ENCODE measurements at regions of chr1 and their contacts with region 1.

Region 1: DNA sequence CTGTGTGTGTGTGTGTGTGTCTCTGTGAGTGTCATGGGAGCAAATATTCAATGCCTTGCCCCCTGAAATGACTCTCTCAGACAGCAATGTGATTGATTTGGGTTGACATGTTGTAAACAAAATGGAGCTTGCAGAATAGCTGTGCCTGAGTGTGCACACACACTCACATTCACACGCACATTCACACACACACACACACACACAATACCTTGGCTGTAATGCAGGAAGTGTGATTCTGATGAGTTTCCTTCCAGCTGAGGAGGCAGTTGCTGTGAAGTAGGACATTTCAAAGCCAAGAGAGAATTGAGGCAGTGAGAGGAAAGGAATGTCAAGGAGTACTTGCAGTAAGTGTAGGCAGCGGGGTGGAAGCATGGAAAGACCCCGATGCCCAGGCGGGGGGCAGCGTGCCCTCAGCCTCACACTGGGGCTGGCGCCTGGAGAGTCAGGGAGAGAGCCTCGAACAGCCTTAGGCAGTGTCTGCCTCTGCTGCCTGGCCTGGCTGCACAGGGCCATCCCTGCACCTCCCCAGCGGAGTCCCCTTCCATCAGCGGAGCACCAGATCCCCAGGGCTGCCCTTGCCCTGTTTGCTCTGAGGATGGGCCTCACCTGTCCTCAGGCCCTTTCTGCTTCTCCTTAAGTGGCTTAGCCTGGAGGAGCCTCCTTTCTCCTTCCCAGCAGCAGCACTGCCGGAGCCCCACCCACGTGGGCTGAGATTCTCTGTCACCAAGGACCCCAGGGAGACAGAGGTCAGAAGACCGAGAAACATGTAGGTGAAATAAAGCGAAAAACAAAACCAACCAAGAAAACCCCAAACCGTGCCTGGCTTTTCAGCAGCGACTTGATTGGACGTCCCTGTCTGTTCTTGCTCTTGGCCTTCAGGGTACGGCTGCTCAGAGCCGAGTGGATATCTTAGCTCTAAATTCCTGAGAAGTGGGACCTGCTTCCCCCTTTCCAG is 9.2 kb downstream of the VASH2 start:
- DNase-seq: peak; percentile 79
- ATAC-seq: peak; percentile 77
- H3K4me3 ChIP-seq: peak overlapping the region; percentile 37; the same call in 1 of the 2 replicates
- H3K27ac ChIP-seq: peak overlapping the region; percentile 91
- H3K4me1 ChIP-seq: peaks cover 75% of the 10 kb centered on the region
- H3K27me3 ChIP-seq: no peaks in the 10 kb centered on the region
- CTCF ChIP-seq: no peak
- EP300 ChIP-seq: no peak
- POLR2A ChIP-seq: no peak
- RAD21 ChIP-seq: no peak

Region 2: DNA sequence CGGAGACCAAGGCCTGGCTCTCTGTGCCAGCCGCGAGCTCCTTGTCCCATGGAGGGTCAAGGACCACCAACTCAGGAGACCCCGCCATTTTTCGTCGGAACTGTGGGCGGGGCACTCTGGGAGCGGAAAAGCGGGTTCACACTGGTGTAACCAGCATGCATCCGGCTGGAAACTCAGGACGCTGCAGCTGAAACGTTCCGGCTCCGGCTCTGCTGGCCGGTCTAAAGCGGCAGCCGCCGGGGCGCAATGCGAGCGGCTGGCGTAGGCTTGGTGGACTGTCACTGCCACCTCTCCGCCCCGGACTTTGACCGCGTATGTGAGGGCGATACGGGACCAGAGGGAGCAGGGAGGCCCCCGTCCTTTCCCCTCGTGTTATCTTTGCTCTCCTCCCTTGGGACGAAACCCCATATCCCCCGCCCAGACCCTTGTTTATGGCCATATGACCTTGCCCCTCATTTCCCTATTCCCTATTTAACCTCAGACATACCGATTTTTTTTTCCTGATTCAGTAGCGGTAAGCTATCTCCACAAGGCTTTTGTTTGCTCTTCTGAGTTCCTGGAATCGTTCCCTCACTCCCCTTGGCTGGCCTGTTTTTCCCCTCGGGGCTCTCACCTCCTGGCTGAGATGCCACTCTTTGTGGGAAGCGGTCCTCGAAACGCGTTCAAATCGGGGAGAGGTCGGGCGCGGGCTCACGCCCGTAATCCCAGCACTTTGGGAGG is 167.7 kb before region 1 on chr1 and contains the starts of genes NSL1 and TATDN3:
- CTCF ChIA-PET with region 1: interaction called, 3 read pairs
- POLR2A ChIA-PET with region 1: interaction called, 8 read pairs
- RAD21 ChIA-PET with region 1: no interaction called
- SMC1A ChIA-PET with region 1: interaction called, 4 read pairs
- in situ Hi-C with region 1: no loop called
- intact Hi-C with region 1: loop called (anchors 2 kb)
- DNase-seq: peak; percentile 90
- ATAC-seq: peak; percentile 83
- H3K4me3 ChIP-seq: peak within 1 kb of the TSS; percentile 78
- H3K27ac ChIP-seq: peak within 1 kb of the TSS; percentile 97
- H3K4me1 ChIP-seq: peaks cover 8% of the 10 kb centered on the region
- H3K27me3 ChIP-seq: no peaks in the 10 kb centered on the region
- CTCF ChIP-seq: no peak
- EP300 ChIP-seq: no peak
- POLR2A ChIP-seq: peak; percentile 99
- RAD21 ChIP-seq: no peak
- polyA plus RNA-seq, gene NSL1: 46.5 to 67.2 TPM
- polyA plus RNA-seq, gene TATDN3: 34.0 to 40.0 TPM

Region 3: DNA sequence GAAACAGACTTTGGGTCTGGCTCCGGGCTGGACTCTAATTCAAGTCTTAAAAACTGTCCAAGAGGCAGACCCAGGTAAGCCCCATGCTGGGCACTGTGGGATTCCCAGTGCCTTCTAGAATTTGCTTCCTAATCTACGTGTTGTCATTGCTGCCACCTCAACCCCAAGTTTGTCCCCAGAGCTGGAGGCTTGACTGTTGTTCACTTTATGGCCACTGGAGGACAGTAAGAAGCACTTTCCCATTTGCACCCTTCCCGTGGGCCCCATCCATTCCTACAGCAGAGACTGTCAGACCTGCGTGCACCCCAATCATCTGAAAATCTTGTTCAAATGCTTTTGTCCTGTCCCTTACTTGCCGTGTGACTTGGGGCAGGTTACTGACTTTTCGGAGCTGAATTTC is 38.6 kb before region 1 on chr1:
- CTCF ChIA-PET with region 1: interaction called, 5 read pairs
- POLR2A ChIA-PET with region 1: interaction called, 4 read pairs
- RAD21 ChIA-PET with region 1: interaction called, 6 read pairs
- SMC1A ChIA-PET with region 1: interaction called, 27 read pairs
- in situ Hi-C with region 1: no loop called
- intact Hi-C with region 1: loop called (anchors 2 kb)
- DNase-seq: no peak
- ATAC-seq: peak; percentile 51
- H3K4me3 ChIP-seq: no peak overlapping the region
- H3K27ac ChIP-seq: no peak overlapping the region
- H3K4me1 ChIP-seq: peaks cover 20% of the 10 kb centered on the region
- H3K27me3 ChIP-seq: no peaks in the 10 kb centered on the region
- CTCF ChIP-seq: peak; percentile 45 to 67 (median 57); a peak in 5 of 6 replicates
- EP300 ChIP-seq: no peak
- POLR2A ChIP-seq: no peak
- RAD21 ChIP-seq: peak; percentile 71

Region 4: DNA sequence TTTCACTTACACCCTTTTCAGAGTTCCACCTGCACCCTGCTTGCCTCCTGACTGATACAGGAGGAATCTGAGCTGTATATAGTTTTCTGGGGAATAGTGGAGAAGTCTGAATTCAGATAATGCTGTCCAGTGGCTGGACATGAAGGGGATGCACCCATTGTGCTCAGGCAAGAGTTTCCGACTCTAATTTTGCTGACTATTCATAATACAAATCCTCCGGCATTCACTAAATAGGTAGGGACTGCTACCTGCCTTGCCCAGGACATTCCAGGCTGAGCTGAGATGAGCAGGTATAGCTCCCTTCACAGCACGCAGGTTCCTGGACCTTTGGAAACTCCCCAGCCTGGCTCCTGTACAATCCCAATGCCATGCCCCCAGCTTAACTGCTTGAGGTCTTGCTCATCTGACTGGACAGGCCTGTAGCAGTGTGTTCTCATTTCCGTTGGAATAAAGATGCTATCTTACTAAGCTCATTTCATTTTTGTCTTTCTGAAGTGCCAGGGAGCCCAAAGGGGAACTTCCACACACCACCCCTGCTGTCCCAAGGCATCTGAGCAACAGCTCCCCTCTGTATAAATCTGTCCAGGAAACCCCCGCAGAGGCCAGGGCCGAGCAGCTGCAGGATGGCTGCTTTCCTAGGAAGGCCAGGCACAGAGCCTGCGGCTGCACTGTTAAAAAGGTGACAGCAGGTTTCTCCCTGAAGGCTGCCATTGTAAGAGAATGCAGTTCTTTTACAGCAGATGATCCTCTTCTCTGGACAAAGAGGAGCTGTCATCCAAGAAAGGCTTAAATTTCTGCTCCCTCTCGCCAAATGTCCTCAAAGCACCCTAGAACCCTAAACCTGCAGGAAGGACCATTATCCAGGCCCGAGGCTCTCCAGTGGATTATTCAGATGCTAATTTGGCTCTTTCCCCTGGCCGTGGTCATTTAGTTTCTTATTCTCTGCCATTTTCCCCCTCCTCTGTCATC is 30.9 kb before region 1 on chr1:
- CTCF ChIA-PET with region 1: interaction called, 4 read pairs
- POLR2A ChIA-PET with region 1: interaction called, 33 read pairs
- RAD21 ChIA-PET with region 1: interaction called, 13 read pairs
- SMC1A ChIA-PET with region 1: interaction called, 22 read pairs
- in situ Hi-C with region 1: no loop called
- intact Hi-C with region 1: loop called (anchors 2 kb)
- DNase-seq: peak; percentile 65
- ATAC-seq: peak; percentile 87
- H3K4me3 ChIP-seq: no peak overlapping the region
- H3K27ac ChIP-seq: peak overlapping the region; percentile 79
- H3K4me1 ChIP-seq: peaks cover 18% of the 10 kb centered on the region
- H3K27me3 ChIP-seq: no peaks in the 10 kb centered on the region
- CTCF ChIP-seq: no peak
- EP300 ChIP-seq: no peak
- POLR2A ChIP-seq: no peak
- RAD21 ChIP-seq: no peak

Measured in GM12878 (cell line).